ENCODE measurements at regions of chr11 and their contacts with region 1.

Region 1: DNA sequence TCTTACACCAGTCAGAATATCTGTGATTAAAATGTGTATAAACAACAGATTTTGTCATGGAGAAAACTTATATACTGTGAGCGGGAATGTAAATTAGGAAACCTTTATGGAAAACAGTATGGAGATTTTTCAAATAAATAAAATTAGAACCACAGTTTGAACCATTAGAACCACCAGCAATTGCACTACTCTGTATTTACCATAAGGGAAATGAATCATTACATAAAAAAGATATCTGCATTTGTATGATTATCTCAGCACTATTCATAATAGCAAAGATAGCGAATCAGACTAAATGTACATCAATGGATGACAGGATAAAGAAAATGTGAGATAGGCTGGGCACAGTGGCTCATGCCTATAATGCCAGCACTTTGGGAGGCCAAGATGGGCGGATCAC is 7.4 kb upstream of the OR52N4 start:
- H3K4me3 Mint-ChIP-seq: no peak overlapping the region
- H3K27ac Mint-ChIP-seq: no peak overlapping the region
- H3K4me1 Mint-ChIP-seq: no peaks in the 10 kb centered on the region
- H3K27me3 Mint-ChIP-seq: no peaks in the 10 kb centered on the region

Region 2: GRCh38 chr11:5639953-5640352 is 106.7 kb before region 1 on chr11:
- intact Hi-C with region 1: no loop called
- H3K4me3 Mint-ChIP-seq: no peak overlapping the region
- H3K27ac Mint-ChIP-seq: no peak overlapping the region
- H3K4me1 Mint-ChIP-seq: no peaks in the 10 kb centered on the region
- H3K27me3 Mint-ChIP-seq: no peaks in the 10 kb centered on the region

Region 3: GRCh38 chr11:5796541-5796940 is 49.9 kb after region 1 on chr11:
- intact Hi-C with region 1: loop called (anchors 10 kb)
- H3K4me3 Mint-ChIP-seq: no peak overlapping the region
- H3K27ac Mint-ChIP-seq: no peak overlapping the region
- H3K4me1 Mint-ChIP-seq: no peaks in the 10 kb centered on the region
- H3K27me3 Mint-ChIP-seq: no peaks in the 10 kb centered on the region